ENCODE measurements at regions of chr10 and their contacts with region 1.

Region 1: GRCh38 chr10:71052076-71052660 is 160.2 kb upstream of the UNC5B start:
- DNase-seq: no peak
- ATAC-seq: no peak
- H3K4me3 ChIP-seq: no peak overlapping the region
- H3K27ac ChIP-seq: no peak overlapping the region
- H3K4me1 ChIP-seq: no peaks in the 10 kb centered on the region
- CTCF ChIP-seq: no peak
- EP300 ChIP-seq: no peak
- POLR2A ChIP-seq: no peak
- RAD21 ChIP-seq: no peak

Region 2: GRCh38 chr10:71040846-71041605 is 11.1 kb before region 1 on chr10:
- CTCF ChIA-PET with region 1: interaction called, 11 read pairs
- POLR2A ChIA-PET with region 1: no interaction called
- DNase-seq: no peak
- ATAC-seq: no peak
- H3K4me3 ChIP-seq: no peak overlapping the region
- H3K27ac ChIP-seq: no peak overlapping the region
- H3K4me1 ChIP-seq: no peaks in the 10 kb centered on the region
- CTCF ChIP-seq: no peak
- EP300 ChIP-seq: no peak
- POLR2A ChIP-seq: no peak
- RAD21 ChIP-seq: no peak

Region 3: GRCh38 chr10:71232089-71232998 is 180.2 kb after region 1 on chr10:
- CTCF ChIA-PET with region 1: no interaction called
- POLR2A ChIA-PET with region 1: no interaction called
- DNase-seq: no peak
- ATAC-seq: no peak
- H3K4me3 ChIP-seq: no peak overlapping the region
- H3K27ac ChIP-seq: no peak overlapping the region
- H3K4me1 ChIP-seq: no peaks in the 10 kb centered on the region
- CTCF ChIP-seq: no peak
- EP300 ChIP-seq: no peak
- POLR2A ChIP-seq: no peak
- RAD21 ChIP-seq: no peak